ENCODE measurements at regions of chr7 and their contacts with region 1.

Region 1: DNA sequence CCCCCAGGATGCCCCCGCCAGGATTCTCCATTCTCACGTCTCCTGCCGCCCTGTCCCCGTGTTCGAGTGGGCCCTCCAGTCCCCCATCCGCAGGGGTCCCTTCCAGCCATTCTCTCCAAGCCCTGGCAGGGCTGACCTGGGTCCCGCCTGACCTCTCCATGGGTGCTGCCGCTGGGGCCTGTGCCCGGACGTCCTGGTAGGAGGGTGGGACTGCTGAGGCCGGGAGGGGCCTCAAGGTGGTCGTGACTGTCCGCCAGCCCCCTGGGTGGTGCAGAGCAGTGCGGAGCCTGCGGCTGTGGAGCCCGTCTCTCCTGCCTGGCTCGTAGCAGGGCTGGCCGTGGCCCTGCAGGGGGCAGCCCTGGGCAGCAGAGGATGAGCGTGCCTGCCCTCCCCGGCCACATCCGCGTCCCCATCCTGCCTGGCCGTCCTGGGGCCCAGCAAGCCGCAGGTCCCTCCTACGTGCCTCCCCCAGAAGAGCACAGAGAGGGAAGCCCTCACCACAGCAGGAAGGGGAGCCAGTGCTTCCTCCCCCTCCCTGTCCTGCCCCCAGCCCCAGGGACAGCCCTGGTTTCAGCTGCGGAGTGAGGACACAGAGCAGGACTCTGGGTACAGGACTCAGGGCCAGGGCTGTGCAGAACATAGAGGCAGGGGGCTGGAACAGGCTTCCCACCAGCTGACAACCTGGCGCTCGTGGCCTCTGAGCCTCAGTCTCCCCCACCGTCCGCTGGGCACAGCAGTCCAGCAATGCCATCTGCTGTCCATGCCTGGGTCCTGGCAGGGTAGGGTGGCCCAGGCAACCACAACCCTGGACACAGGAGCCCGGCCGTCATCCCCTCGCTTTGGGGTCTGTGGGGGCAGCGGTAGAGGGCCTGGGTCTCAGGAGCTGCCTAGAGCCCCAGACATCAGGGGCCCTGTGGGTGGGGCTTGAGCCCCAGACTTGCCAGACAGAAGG is 1.5 kb upstream of the GRIFIN start:
- DNase-seq: peak; percentile 64 to 77
- ATAC-seq: peak; percentile 82 to 90 (median 86)
- H3K4me3 ChIP-seq: peak overlapping the region in 2 of 10 donors; percentile 7 to 15
- H3K27ac ChIP-seq: peak overlapping the region in 4 of 10 donors; percentile 14 to 56 (median 26)
- H3K4me1 ChIP-seq: peaks cover 14 to 37% (median 29%) of the 10 kb centered on the region in 9 donors
- H3K27me3 ChIP-seq: peaks cover 0 to 21% (median 8%) of the 10 kb centered on the region in 7 donors
- CTCF ChIP-seq: peak; percentile 60 to 89 (median 77)

Region 2: DNA sequence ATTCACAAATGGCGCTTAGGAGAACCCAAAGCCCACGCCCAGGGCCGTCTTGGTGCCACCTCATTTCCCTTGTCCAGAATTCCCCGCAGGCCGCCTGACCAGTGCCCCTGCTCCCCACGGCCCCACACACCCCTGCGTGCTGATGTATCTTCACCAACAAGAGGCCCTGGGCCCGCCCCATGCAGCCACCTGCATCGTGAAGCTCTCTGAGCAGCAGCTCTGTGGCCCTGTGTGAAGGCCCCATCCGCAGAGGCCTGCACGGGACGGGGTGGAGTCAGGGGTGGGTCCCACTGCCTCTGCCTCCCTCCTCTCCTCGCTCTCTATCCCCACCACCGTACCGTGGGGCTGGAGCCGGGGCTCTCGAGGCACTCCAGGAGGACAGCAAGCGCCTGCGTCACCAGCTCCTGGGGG is 62.9 kb after region 1 on chr7:
- intact Hi-C with region 1: loop called in 1 of 10 experiments (anchors 10 kb)
- DNase-seq: no peak
- ATAC-seq: peak in 1 of 8 donors; percentile 11
- H3K4me3 ChIP-seq: no peak overlapping the region
- H3K27ac ChIP-seq: no peak overlapping the region
- H3K4me1 ChIP-seq: no peaks in the 10 kb centered on the region
- H3K27me3 ChIP-seq: no peaks in the 10 kb centered on the region
- CTCF ChIP-seq: no peak

Region 3: DNA sequence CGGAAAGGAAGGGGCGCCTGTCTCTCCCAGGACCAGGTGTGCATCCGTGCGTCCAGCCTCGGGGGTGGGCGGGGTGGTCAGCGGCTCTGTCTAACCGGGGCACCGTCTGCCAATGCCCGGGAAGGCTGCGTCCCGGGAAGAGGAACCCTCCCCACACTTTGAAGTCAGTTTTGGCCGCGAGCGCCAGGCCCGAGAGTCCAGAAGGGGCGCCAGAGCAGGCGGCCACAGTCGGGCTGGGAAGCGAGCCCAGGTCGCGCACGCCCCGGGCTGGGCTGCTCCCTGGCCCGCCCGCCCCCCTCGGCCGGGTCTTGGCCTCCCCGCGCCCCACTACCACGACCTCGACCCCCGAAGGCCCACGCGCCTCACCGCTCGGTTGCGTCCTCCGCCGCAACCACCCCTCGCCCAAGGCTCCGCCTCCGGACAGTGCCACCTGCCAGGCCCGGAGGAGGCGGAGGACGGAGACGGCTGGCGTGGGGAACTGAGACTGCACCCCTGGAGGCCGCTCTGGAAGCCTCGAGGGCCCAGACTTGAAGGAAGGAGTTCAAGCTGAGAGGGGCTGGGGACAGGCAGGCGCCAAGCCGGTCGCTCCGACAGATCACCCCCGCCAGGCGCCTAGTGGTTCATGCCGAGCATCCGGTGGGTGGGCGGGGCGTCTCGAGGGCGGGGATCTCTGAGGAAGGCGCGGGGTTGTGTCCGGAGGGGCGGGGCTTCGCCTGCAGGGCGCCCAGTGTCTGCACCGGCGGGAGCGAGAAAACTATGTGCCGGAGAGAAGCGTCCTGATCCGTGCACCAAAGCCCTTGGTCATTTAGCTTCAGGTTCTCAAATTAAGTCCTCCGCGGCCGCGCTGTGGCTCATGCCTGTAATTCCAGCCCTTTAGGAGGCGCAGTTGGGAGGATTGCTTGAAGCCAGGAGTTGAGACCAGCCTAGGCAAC is 77.7 kb after region 1 on chr7 and contains the start of gene BRAT1:
- intact Hi-C with region 1: loop called in 7 of 10 experiments (anchors 5 to 10 kb)
- DNase-seq: peak; percentile 97 to 98
- ATAC-seq: peak; percentile 91 to 97 (median 94)
- H3K4me3 ChIP-seq: peak within 1 kb of the TSS; percentile 86 to 99 (median 92)
- H3K27ac ChIP-seq: peak within 1 kb of the TSS; percentile 95 to 100 (median 100)
- H3K4me1 ChIP-seq: peaks cover 0 to 62% (median 36%) of the 10 kb centered on the region in 9 donors
- H3K27me3 ChIP-seq: no peaks in the 10 kb centered on the region
- CTCF ChIP-seq: peak; percentile 16 to 71 (median 45)
- total RNA-seq, gene BRAT1: 10.6 to 18.2 (median 12.8) TPM